ENCODE measurements at regions of chr12 and their contacts with region 1.

Region 1: DNA sequence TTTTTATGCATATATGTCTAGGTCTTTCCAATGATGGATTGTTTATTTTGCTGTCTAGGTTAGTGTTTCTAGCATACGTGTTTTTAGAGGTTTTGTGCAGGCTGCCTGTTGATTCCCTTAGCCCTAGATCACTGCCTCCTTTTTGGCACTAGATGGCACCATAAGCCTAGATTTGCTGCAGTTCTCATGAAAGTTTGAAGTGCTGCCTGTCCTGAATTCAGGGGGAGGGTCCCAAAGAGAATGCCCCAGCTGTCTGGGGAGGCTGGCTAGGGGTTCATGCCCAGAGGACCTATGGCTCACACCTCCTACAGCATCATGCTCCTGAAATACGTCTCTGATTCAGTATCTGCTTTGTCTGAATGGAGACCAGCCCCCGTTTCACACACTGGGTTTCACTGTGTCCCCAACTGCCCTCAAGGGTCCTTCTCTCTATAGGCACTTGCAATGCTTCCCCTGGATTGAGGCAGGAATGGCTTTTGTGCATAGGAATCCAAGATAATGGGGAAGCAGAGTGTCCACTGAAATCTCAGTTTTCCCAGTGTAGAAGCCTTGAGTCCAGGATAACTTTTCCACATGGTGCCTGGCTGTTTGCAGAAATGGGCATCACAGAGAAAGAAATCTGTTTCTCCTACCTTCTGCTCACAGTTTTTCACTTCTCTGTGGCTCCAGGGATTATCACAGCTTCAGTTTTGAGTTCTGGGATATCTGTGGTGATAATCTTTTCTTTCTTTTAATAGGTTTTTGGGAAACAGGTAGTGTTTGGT is 14.2 kb upstream of the TXNRD1 start:
- DNase-seq: no peak
- ATAC-seq: peak; percentile 78

Region 2: DNA sequence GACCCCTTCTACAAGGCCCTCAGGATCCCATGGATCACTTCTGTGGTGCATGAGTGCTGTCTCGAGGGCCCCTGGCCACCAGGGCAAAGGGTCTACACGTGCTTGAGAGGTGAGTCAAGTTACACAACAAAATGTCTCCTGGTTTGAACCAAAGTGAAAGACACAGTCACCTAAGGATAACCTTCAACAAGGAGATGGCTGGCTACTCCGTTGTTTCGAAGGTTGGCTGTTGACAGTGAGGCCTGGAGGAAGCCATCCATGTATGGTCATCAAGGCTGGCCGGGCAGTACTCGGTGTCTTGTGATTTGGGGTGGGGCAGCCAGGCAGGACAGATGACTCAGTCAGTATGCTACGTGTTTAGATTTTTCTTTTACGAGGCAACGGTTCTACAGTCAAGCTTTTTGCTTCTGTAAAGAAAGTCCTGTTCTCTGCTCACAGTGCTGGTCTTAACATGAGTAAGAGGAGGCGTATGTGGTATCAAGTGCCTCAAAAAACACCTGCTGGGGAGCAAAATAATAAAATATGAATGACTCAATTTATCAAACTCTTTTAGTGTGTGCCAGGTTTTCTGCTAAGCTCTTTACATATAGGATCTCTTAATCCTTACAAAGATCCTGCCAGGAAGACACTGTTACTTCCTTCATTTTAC is 342.3 kb before region 1 on chr12:
- intact Hi-C with region 1: no loop called
- DNase-seq: no peak
- ATAC-seq: peak; percentile 54

Region 3: GRCh38 chr12:104358347-104359003 is 157.1 kb after region 1 on chr12:
- intact Hi-C with region 1: loop called (anchors 1 kb)
- DNase-seq: peak; percentile 75
- ATAC-seq: peak; percentile 79

Region 4: GRCh38 chr12:104877123-104877705 is 675.8 kb after region 1 on chr12:
- intact Hi-C with region 1: loop called (anchors 10 kb)
- DNase-seq: no peak
- ATAC-seq: peak; percentile 72